Posterior vena cava (tissue), 2 donors: ENCODE measurements at regions of chr13 and their contacts with region 1.

Region 1: GRCh38 chr13:35179920-35180663 is 238.0 kb downstream of the NBEA start:
- DNase-seq: no peak

Region 2: GRCh38 chr13:35485424-35485823 is 305.3 kb after region 1 on chr13:
- intact Hi-C with region 1: loop called in 1 of 2 experiments (anchors 5 kb)
- DNase-seq: no peak

Region 3: DNA sequence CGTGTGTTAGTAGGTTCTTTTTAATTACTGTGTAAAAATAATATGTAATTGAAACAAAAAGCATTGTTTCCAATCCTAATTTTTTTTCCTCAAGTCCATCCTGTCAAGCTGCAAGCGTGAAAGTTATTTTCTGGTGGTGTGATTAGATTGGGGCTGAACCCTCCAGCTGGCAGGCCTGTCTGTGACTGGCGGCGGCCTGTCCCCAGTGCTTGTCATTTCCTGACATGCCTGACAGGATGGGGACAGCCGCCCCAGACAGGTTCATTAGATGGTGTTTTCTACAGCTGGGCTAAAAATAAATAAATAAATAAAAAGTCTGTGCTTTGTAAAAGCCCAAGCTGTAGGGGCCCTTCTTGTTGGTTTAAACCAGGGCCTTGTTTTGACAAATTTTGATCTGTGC is 350.1 kb after region 1 on chr13:
- intact Hi-C with region 1: no loop called
- DNase-seq: no peak